Breast epithelium (tissue), 4 donors: ENCODE measurements at regions of chr1 and their contacts with region 1.

Region 1: GRCh38 chr1:170340343-170340707 is 191.6 kb upstream of the GORAB start:
- DNase-seq: no peak
- H3K4me3 ChIP-seq: no peak overlapping the region
- H3K27ac ChIP-seq: no peak overlapping the region
- H3K4me1 ChIP-seq: no peaks in the 10 kb centered on the region
- H3K27me3 ChIP-seq: no peaks in the 10 kb centered on the region
- CTCF ChIP-seq: no peak
- POLR2A ChIP-seq: no peak

Region 2: DNA sequence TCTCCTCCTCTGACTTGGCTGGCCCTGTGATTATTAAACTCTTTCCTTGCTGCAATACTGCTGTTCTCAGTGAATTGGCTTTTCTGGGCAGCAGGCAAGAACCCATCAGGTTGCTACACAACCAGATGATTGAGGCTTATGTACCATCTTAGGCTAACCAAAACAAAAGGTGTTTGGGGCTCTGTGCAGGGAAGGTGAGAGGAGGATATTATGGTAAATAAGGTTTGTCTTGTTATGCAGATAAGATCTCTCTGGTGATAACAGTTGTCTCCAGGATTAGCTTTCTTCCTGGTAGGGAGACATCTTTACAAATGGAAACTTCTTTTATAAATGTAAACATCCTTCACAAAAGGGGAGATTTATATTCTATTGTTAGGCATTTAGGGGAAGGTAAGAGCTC is 147.2 kb after region 1 on chr1:
- intact Hi-C with region 1: loop called (anchors 5 kb)
- DNase-seq: no peak
- H3K4me3 ChIP-seq: no peak overlapping the region
- H3K27ac ChIP-seq: no peak overlapping the region
- H3K4me1 ChIP-seq: no peaks in the 10 kb centered on the region
- H3K27me3 ChIP-seq: no peaks in the 10 kb centered on the region
- CTCF ChIP-seq: no peak
- POLR2A ChIP-seq: no peak